ENCODE measurements at regions of chr17 and their contacts with region 1.

Region 1: GRCh38 chr17:63478791-63479494 is 2.1 kb downstream of the ACE start:
- DNase-seq: peak; percentile 89
- ATAC-seq: peak; percentile 90
- H3K4me3 Mint-ChIP-seq: no peak overlapping the region
- H3K27ac Mint-ChIP-seq: no peak overlapping the region
- H3K4me1 Mint-ChIP-seq: peaks cover 10% of the 10 kb centered on the region
- H3K27me3 Mint-ChIP-seq: peaks cover 39% of the 10 kb centered on the region

Region 2: DNA sequence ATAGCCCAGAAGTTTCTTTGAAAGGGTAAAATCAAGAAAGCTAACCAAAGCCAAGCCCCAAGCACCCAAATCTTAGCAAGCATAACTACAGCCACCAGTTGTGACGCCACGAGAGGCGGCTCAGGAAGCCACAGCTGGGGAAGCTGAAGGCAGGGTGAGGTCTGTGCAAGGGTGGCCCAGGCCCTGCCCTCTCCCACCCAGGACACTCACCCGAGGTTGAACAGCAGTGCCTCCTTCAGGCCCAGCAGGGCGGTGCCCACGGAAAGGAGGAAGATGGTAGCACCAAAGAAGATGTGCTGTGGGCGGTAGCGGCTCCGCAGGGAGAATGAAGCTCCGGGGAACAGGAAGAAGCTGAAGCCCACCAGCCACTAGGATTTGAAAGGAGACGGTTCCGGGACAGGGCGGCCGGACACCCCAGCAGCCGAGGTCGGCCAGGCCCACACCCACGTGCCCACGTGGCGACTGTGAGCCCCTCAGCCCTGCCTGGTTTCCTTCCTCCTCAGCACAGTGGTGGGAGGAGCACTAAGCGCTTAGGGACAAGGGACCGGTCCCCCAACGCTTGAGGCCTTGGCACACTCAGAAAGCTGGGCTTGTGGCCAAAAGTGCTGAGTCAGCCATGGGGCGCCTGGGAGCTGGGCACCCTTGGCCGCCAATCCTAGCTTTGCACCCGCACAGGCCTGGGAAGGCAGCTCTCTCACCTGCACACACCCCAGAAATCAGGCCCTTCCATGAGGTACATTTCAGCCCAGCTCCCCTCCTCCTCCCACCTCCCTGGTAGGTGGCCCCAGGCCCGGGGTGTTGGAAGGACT is 43.9 kb before region 1 on chr17:
- CTCF ChIA-PET with region 1: interaction called, 324 read pairs
- DNase-seq: peak; percentile 91
- ATAC-seq: peak; percentile 93
- H3K4me3 Mint-ChIP-seq: peak overlapping the region; percentile 56
- H3K27ac Mint-ChIP-seq: peak overlapping the region; percentile 97
- H3K4me1 Mint-ChIP-seq: peaks cover 62% of the 10 kb centered on the region
- H3K27me3 Mint-ChIP-seq: no peaks in the 10 kb centered on the region

Region 3: DNA sequence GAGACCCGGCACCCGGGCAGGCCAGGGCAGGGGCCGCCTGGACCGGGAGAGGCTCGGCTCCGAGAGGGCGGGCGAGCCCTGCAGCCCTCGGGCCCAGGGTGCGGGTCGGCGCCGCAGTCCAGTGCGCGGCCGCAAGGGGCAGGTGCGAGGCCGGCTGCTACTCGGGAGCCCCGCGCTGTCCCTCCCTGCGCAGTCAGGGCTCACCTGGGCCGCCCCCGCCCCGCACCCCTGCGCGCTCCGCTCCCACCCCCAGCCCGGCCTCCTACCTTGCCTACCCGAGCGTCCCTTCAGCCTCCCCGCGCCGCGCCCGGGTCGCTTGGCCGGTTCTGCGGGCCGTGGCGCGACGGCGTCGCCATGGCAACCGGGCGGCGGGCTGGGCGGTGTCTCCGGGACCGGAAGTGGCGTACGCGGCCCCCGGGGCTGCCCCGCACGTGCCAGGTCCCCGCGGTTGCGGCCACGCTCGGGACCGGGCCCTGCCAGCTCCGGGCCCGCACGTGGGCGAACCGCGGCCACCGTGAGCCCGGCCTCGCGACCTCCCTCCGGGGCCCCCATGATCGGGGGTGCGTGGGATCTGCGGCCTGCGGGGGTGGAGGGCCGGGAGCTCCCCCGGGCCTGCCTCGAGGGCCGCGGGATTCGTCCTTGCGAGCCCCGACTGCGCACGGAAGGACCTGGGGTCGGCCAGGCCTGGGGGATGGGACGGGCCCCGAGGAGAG is 32.8 kb before region 1 on chr17 and contains the start of gene CYB561:
- CTCF ChIA-PET with region 1: interaction called, 67 read pairs
- DNase-seq: peak; percentile 70
- ATAC-seq: peak; percentile 76
- H3K4me3 Mint-ChIP-seq: peak within 1 kb of the TSS; percentile 47
- H3K27ac Mint-ChIP-seq: peak within 1 kb of the TSS; percentile 75
- H3K4me1 Mint-ChIP-seq: peaks cover 18% of the 10 kb centered on the region
- H3K27me3 Mint-ChIP-seq: peaks cover 3% of the 10 kb centered on the region
- total RNA-seq, gene CYB561: 2.2 to 13.6 TPM

Region 4: GRCh38 chr17:63464691-63465236 is 14.2 kb before region 1 on chr17:
- CTCF ChIA-PET with region 1: interaction called, 20 read pairs
- DNase-seq: no peak
- ATAC-seq: no peak
- H3K4me3 Mint-ChIP-seq: no peak overlapping the region
- H3K27ac Mint-ChIP-seq: no peak overlapping the region
- H3K4me1 Mint-ChIP-seq: no peaks in the 10 kb centered on the region
- H3K27me3 Mint-ChIP-seq: peaks cover 24% of the 10 kb centered on the region

Region 5: GRCh38 chr17:63549946-63550807 is 71.2 kb after region 1 on chr17 and contains the start of gene DCAF7:
- CTCF ChIA-PET with region 1: interaction called, 14 read pairs
- DNase-seq: peak; percentile 100
- ATAC-seq: peak; percentile 95
- H3K4me3 Mint-ChIP-seq: peak within 1 kb of the TSS; percentile 88
- H3K27ac Mint-ChIP-seq: peak within 1 kb of the TSS; percentile 98
- H3K4me1 Mint-ChIP-seq: peaks cover 33% of the 10 kb centered on the region
- H3K27me3 Mint-ChIP-seq: no peaks in the 10 kb centered on the region
- total RNA-seq, gene DCAF7: 129 to 139 TPM

Measured in activated CD8-positive, alpha-beta memory T cell treated with anti-CD3 and anti-CD28 coated beads, Interleukin-2, amount 10 ng/mL, durations not matched to agents 7 days and 5 days (primary cell).